ENCODE measurements at regions of chr7 and their contacts with region 1.

Region 1: GRCh38 chr7:103344453-103345149 is at the start of gene DNAJC2:
- DNase-seq: peak; percentile 87
- H3K4me3 ChIP-seq: peak within 1 kb of the TSS; percentile 86 to 97 (median 93)
- H3K27ac ChIP-seq: peak within 1 kb of the TSS; percentile 80
- H3K4me1 ChIP-seq: peaks cover 5% of the 10 kb centered on the region
- H3K27me3 ChIP-seq: no peaks in the 10 kb centered on the region
- CTCF ChIP-seq: no peak
- total RNA-seq, gene DNAJC2: 11.5 to 29.4 TPM

Region 2: GRCh38 chr7:103037476-103037822 is 307.2 kb before region 1 on chr7:
- CTCF ChIA-PET with region 1: no interaction called
- dilution Hi-C with region 1: no loop called
- in situ Hi-C with region 1: no loop called
- intact Hi-C with region 1: no loop called
- DNase-seq: no peak
- H3K4me3 ChIP-seq: no peak overlapping the region
- H3K27ac ChIP-seq: no peak overlapping the region
- H3K4me1 ChIP-seq: no peaks in the 10 kb centered on the region
- H3K27me3 ChIP-seq: no peaks in the 10 kb centered on the region
- CTCF ChIP-seq: no peak

Region 3: GRCh38 chr7:103141753-103142404 is 202.7 kb before region 1 on chr7:
- CTCF ChIA-PET with region 1: no interaction called
- dilution Hi-C with region 1: no loop called
- in situ Hi-C with region 1: no loop called
- intact Hi-C with region 1: no loop called
- DNase-seq: peak; percentile 35
- H3K4me3 ChIP-seq: no peak overlapping the region
- H3K27ac ChIP-seq: no peak overlapping the region
- H3K4me1 ChIP-seq: no peaks in the 10 kb centered on the region
- H3K27me3 ChIP-seq: no peaks in the 10 kb centered on the region
- CTCF ChIP-seq: no peak

Region 4: GRCh38 chr7:103296901-103297836 is 47.4 kb before region 1 on chr7 and contains the start of gene PMPCB:
- CTCF ChIA-PET with region 1: no interaction called
- dilution Hi-C with region 1: no loop called
- in situ Hi-C with region 1: no loop called
- intact Hi-C with region 1: loop called (anchors 1 kb)
- DNase-seq: peak; percentile 82
- H3K4me3 ChIP-seq: peak within 1 kb of the TSS; percentile 69 to 96 (median 90)
- H3K27ac ChIP-seq: peak within 1 kb of the TSS; percentile 61
- H3K4me1 ChIP-seq: peaks cover 11% of the 10 kb centered on the region
- H3K27me3 ChIP-seq: no peaks in the 10 kb centered on the region
- CTCF ChIP-seq: peak; percentile 82 to 96
- total RNA-seq, gene PMPCB: 48.7 to 49.1 TPM

Region 5: GRCh38 chr7:103307503-103308231 is 36.9 kb before region 1 on chr7:
- CTCF ChIA-PET with region 1: no interaction called
- dilution Hi-C with region 1: loop called (anchors 5 kb)
- in situ Hi-C with region 1: no loop called
- intact Hi-C with region 1: no loop called
- DNase-seq: no peak
- H3K4me3 ChIP-seq: no peak overlapping the region
- H3K27ac ChIP-seq: no peak overlapping the region
- H3K4me1 ChIP-seq: no peaks in the 10 kb centered on the region
- H3K27me3 ChIP-seq: no peaks in the 10 kb centered on the region
- CTCF ChIP-seq: no peak

Region 6: DNA sequence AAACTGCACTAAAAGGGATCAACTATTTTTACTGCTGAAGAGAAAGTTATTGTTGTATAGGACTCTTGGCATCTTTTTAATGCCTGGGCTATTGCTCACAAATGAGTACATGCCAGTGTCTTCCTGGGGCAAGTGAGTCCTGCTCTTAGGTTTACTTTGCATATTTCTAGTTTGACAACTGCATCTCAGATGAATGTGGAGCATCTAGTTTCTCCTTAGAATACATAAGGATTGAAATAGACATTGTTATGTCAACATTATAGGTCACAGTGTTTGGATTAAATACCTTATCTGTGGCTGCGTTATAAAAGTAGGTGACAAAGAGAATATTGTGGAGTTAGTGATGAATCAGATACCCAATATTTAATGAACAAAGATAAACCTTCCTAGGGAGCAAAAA is 47.4 kb after region 1 on chr7:
- CTCF ChIA-PET with region 1: no interaction called
- dilution Hi-C with region 1: no loop called
- in situ Hi-C with region 1: no loop called
- intact Hi-C with region 1: no loop called
- DNase-seq: no peak
- H3K4me3 ChIP-seq: no peak overlapping the region
- H3K27ac ChIP-seq: no peak overlapping the region
- H3K4me1 ChIP-seq: no peaks in the 10 kb centered on the region
- H3K27me3 ChIP-seq: no peaks in the 10 kb centered on the region
- CTCF ChIP-seq: no peak

Region 7: GRCh38 chr7:103412151-103412550 is 67.5 kb after region 1 on chr7:
- CTCF ChIA-PET with region 1: no interaction called
- dilution Hi-C with region 1: no loop called
- in situ Hi-C with region 1: no loop called
- intact Hi-C with region 1: loop called (anchors 2 kb)
- DNase-seq: no peak
- H3K4me3 ChIP-seq: no peak overlapping the region
- H3K27ac ChIP-seq: no peak overlapping the region
- H3K4me1 ChIP-seq: no peaks in the 10 kb centered on the region
- H3K27me3 ChIP-seq: peaks cover 2% of the 10 kb centered on the region
- CTCF ChIP-seq: no peak